Right ventricle myocardium inferior (tissue), 1 donor: ENCODE measurements at regions of chr3 and their contacts with region 1.

Region 1: DNA sequence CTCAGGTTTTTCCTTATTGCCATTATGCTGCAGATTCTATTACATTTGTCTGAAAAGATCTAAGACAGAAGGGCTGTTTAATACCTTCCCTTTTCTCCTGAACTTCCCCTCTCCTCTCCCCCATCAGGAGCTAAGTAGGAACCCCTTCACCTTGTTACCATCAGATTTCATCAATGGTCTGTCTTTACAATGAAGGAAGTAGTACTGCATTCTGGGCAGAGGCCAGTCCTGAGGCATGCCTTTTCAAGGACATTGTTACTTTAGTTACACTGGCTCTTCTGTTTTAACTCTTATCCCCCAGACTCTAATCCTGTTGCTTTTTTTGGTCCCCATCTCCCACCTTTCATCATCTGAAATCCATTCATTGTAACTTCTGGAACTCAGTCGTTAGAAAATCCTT is 8.1 kb downstream of the CTNNB1 start:
- DNase-seq: no peak
- ATAC-seq: no peak

Region 2: DNA sequence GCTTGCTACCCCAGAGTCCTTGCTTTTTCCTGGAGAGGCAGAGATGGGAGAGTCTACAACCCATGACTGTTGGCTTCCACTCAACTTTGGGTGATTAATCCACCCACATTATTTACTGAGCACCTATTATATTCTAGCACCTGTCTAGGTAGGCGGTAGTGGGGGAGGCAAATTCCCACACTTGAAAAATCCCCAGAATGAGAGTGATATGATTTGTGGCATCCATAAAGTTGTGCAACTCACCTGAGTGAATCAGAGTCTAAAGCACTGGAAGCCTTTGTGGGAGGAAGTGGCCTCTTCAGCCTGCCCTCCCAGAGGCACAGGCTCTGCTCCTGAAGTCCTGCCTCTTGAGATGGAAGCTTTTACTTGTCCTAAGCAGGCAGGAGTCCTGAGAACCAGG is 48.4 kb before region 1 on chr3:
- intact Hi-C with region 1: no loop called
- DNase-seq: no peak
- ATAC-seq: no peak

Region 3: DNA sequence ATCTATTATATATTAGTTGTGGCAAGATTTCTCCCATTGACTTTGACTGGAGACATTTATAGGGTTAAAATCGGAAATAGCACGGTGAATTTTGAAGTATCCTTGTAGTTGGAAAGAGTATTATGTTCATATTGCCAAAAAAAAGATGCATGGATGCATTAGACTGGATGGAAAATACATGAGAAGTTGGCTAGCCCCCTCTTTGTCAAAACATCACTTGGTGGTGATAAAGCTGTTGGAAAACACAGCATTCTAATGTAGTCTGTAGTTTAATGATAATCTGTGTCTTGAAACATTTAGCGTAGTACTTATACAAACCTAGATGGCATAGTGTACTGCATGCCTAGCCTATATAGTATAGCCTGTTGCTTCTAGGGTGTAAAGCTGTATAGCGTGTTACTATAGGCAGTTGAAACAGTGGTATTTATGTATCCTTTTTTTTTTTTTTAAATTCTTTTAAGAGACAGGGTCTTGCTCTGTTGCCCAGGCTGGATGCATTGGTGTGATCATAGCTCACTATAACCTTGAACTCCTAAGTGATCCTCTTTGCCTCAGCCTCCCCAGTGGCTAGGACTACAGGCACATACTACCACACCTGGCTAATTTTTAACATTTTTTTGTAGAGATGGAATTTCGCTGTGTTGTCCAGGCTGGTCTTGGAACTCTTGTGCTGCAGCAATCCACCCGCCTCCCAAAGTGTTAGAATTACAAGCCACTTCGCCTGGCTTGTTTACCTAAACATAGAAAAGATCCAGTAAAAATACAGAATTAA is 13.7 kb after region 1 on chr3:
- intact Hi-C with region 1: loop called (anchors 2 kb)
- DNase-seq: no peak
- ATAC-seq: no peak

Region 4: GRCh38 chr3:41662288-41662687 is 454.9 kb after region 1 on chr3:
- intact Hi-C with region 1: no loop called
- DNase-seq: no peak
- ATAC-seq: no peak